ENCODE measurements at regions of chr9 and their contacts with region 1.

Region 1: GRCh38 chr9:37309136-37309535 is 113.4 kb upstream of the GRHPR start:
- DNase-seq: no peak
- H3K4me3 ChIP-seq: no peak overlapping the region
- H3K27ac ChIP-seq: no peak overlapping the region
- H3K4me1 ChIP-seq: no peaks in the 10 kb centered on the region
- H3K27me3 ChIP-seq: no peaks in the 10 kb centered on the region
- CTCF ChIP-seq: peak; percentile 32 to 54 (median 48)

Region 2: GRCh38 chr9:37422289-37423104 is 113.4 kb after region 1 on chr9 and contains the start of gene GRHPR:
- dilution Hi-C with region 1: loop called (anchors 25 kb)
- DNase-seq: peak; percentile 54
- H3K4me3 ChIP-seq: peak within 1 kb of the TSS; percentile 90 to 96 (median 92)
- H3K27ac ChIP-seq: peak within 1 kb of the TSS; percentile 91
- H3K4me1 ChIP-seq: peaks cover 47% of the 10 kb centered on the region
- H3K27me3 ChIP-seq: no peaks in the 10 kb centered on the region
- CTCF ChIP-seq: no peak
- polyA plus RNA-seq, gene GRHPR: 116 to 173 TPM (median 130 TPM) in 3 replicates